Endothelial cell of umbilical vein (primary cell): ENCODE measurements at regions of chr7 and their contacts with region 1.

Region 1: GRCh38 chr7:106176414-106177299 is 64.5 kb upstream of the SYPL1 start:
- DNase-seq: peak; percentile 89
- H3K4me3 ChIP-seq: no peak overlapping the region
- H3K27ac ChIP-seq: no peak overlapping the region
- H3K4me1 ChIP-seq: no peaks in the 10 kb centered on the region
- H3K27me3 ChIP-seq: no peaks in the 10 kb centered on the region
- CTCF ChIP-seq: peak; percentile 94 to 96
- POLR2A ChIP-seq: no peak

Region 2: GRCh38 chr7:105346593-105347322 is 829.9 kb before region 1 on chr7:
- CTCF ChIA-PET with region 1: no interaction called
- POLR2A ChIA-PET with region 1: no interaction called
- dilution Hi-C with region 1: no loop called
- intact Hi-C with region 1: no loop called
- DNase-seq: no peak
- H3K4me3 ChIP-seq: no peak overlapping the region
- H3K27ac ChIP-seq: no peak overlapping the region
- H3K4me1 ChIP-seq: peaks cover under 1% of the 10 kb centered on the region
- H3K27me3 ChIP-seq: no peaks in the 10 kb centered on the region
- CTCF ChIP-seq: no peak
- POLR2A ChIP-seq: no peak

Region 3: GRCh38 chr7:106260136-106260561 is 83.5 kb after region 1 on chr7:
- CTCF ChIA-PET with region 1: interaction called, 23 read pairs
- POLR2A ChIA-PET with region 1: no interaction called
- dilution Hi-C with region 1: no loop called
- intact Hi-C with region 1: loop called (anchors 5 kb)
- DNase-seq: no peak
- H3K4me3 ChIP-seq: no peak overlapping the region
- H3K27ac ChIP-seq: no peak overlapping the region
- H3K4me1 ChIP-seq: no peaks in the 10 kb centered on the region
- H3K27me3 ChIP-seq: no peaks in the 10 kb centered on the region
- CTCF ChIP-seq: no peak
- POLR2A ChIP-seq: no peak

Region 4: DNA sequence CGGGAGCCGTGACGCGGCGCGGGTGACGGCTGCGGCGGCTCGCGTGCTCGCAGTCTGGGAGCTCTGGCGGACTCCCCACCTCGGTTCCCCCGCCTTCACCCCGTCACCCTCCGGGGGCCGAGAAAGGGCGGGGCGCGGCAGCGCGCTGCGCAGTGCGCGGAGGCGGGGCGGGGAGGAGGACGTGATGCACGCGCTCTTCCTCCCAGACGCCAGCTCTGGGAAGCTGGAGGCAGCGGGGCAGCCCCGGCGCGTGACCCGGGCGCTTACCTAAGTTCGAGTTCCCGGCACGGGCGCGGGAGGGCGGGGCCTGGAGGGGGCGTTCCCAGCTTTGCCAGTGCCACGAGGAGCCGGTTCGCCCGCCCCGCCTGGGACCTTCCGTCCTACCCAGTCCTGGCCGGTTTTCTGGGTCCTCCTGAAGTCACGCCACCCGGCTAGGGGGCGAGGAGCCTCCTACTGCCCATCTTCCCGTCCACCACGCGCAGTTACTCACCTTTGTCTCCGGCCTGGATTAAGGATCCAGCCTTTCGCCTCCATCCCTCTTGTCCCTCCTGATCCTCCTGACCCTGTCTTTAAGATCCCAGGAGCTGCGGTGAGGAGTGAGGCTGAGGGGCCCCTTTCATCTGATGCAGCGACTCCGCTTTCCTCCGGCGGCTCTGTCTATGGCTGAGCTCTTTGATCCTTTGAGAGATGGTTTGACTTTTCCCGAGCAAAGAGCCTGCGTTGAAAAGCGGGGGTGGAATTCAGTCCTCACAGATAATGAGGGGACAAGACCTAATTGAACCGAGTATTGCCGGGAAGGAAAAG is 108.6 kb after region 1 on chr7:
- CTCF ChIA-PET with region 1: interaction called, 38 read pairs
- POLR2A ChIA-PET with region 1: interaction called, 6 read pairs
- dilution Hi-C with region 1: no loop called
- intact Hi-C with region 1: loop called (anchors 1 kb)
- DNase-seq: peak; percentile 99
- H3K4me3 ChIP-seq: peak overlapping the region; percentile 56 to 80 (median 72)
- H3K27ac ChIP-seq: peak overlapping the region; percentile 80
- H3K4me1 ChIP-seq: peaks cover 27% of the 10 kb centered on the region
- H3K27me3 ChIP-seq: no peaks in the 10 kb centered on the region
- CTCF ChIP-seq: no peak
- POLR2A ChIP-seq: peak; percentile 93

Region 5: DNA sequence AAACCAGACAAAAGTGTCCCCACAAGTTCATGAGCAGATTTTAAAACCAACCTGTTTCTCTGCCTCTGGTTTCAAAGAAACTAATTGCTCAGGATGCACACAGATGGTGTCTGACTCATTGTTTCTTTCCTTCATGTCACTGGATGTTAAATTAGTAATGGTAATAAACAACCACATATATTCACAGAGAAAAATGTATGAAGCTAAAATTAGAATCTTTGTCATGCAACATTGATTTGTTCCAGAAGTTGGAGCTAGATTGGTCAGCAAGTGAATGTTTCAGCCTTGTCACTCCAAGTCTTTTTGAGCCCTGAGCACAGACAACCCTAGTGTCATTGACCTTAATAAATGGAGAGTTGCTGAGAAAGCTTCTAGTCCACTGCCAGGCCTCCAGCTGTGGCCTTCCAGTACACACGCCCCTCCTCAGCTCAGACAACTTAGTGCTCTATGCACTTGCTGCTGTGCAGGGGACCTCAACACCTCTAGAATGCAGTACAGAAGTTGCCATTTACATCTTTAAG is 308.4 kb after region 1 on chr7:
- CTCF ChIA-PET with region 1: interaction called, 10 read pairs
- POLR2A ChIA-PET with region 1: no interaction called
- dilution Hi-C with region 1: no loop called
- intact Hi-C with region 1: no loop called
- DNase-seq: peak; percentile 83
- H3K4me3 ChIP-seq: no peak overlapping the region
- H3K27ac ChIP-seq: peak overlapping the region; percentile 54
- H3K4me1 ChIP-seq: peaks cover 13% of the 10 kb centered on the region
- H3K27me3 ChIP-seq: no peaks in the 10 kb centered on the region
- CTCF ChIP-seq: no peak
- POLR2A ChIP-seq: no peak

Region 6: GRCh38 chr7:106588422-106589198 is 412.0 kb after region 1 on chr7:
- CTCF ChIA-PET with region 1: interaction called, 4 read pairs
- POLR2A ChIA-PET with region 1: no interaction called
- dilution Hi-C with region 1: no loop called
- intact Hi-C with region 1: loop called (anchors 5 kb)
- DNase-seq: no peak
- H3K4me3 ChIP-seq: no peak overlapping the region
- H3K27ac ChIP-seq: peak overlapping the region; percentile 89
- H3K4me1 ChIP-seq: peaks cover 30% of the 10 kb centered on the region
- H3K27me3 ChIP-seq: no peaks in the 10 kb centered on the region
- CTCF ChIP-seq: no peak
- POLR2A ChIP-seq: no peak

Region 7: DNA sequence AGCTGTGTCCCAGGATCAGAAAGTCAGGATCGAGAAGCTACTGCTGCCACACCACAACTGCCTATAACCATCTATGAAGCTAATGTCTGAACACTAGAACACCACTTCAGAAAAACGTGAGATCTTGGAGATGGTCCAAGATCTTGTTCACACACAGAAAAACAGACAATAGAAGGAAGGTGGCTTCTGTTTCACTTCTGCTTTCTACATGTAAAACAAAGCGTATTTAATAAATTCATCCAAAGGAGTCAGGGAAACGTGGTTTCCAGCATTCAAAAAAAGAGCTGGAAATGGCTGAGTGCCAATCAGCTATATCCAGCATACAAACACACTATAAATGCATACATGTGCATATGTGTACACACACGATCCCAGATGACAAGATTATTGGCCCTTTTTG is 554.5 kb after region 1 on chr7:
- CTCF ChIA-PET with region 1: interaction called, 106 read pairs
- POLR2A ChIA-PET with region 1: no interaction called
- dilution Hi-C with region 1: no loop called
- intact Hi-C with region 1: loop called (anchors 1 kb)
- DNase-seq: peak; percentile 96
- H3K4me3 ChIP-seq: peak overlapping the region in 1 of 3 experiments; percentile 0
- H3K27ac ChIP-seq: peak overlapping the region; percentile 44
- H3K4me1 ChIP-seq: peaks cover 27% of the 10 kb centered on the region
- H3K27me3 ChIP-seq: no peaks in the 10 kb centered on the region
- CTCF ChIP-seq: no peak
- POLR2A ChIP-seq: no peak

Region 8: GRCh38 chr7:106947244-106947728 is 770.6 kb after region 1 on chr7:
- CTCF ChIA-PET with region 1: interaction called, 17 read pairs
- POLR2A ChIA-PET with region 1: no interaction called
- dilution Hi-C with region 1: no loop called
- intact Hi-C with region 1: loop called (anchors 2 kb)
- DNase-seq: peak; percentile 83
- H3K4me3 ChIP-seq: no peak overlapping the region
- H3K27ac ChIP-seq: no peak overlapping the region
- H3K4me1 ChIP-seq: no peaks in the 10 kb centered on the region
- H3K27me3 ChIP-seq: peaks cover 5 to 8% of the 10 kb centered on the region in 2 experiments
- CTCF ChIP-seq: peak; percentile 64 to 69
- POLR2A ChIP-seq: no peak